ENCODE measurements at regions of chr1 and their contacts with region 1.

Region 1: DNA sequence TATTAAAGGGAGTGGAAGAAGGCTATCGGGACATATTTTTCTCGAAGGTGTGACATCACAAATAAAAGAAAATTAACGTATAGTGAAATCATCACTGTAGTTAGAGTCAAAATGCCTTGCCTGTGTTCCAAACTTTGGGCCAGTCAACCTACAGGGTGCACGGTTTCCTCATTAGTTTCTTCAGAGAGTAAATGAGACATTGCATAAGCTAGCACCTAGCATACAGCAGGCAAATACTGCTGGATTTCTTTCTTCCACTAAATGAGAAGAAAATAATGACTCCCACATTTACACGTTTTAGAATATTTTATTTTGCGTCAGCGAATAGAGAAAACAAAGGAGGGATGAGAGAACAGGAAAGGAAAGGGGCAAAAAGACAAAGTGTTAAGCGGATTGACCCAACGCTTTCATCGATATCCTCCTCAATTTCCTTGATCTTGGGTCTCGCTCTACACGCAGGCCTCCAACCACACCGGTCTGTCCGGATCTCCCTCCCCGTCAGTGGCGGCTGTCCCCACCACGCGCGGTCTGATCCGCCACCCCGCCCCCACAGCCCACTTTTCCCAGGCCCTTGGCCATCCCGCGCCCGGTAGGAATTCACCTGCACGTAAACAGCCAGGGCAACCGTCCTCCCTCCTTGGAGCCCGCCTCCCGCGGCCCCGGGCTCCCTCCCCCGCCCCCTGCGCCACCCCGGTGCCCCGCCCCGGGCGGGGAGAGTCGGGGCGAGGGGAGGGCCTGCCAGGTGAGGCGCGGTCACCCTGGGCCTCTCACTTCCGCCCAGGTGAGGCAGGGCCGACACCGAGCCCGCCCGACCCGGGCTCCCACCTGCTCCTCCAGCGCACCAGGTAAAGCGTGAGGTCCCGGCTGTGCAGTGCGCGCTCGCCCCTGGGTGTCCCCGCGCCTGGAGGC is at the start of gene PATJ:
- DNase-seq: peak; percentile 71 to 84 (median 81)
- H3K4me3 ChIP-seq: peak within 1 kb of the TSS; percentile 83
- H3K27ac ChIP-seq: peak within 1 kb of the TSS; percentile 96 to 99
- H3K4me1 ChIP-seq: no peaks in the 10 kb centered on the region
- H3K27me3 ChIP-seq: no peaks in the 10 kb centered on the region
- CTCF ChIP-seq: no peak
- EP300 ChIP-seq: no peak
- POLR2A ChIP-seq: no peak
- total RNA-seq, gene PATJ: 18.2 to 60.1 (median 26.8) TPM

Region 2: DNA sequence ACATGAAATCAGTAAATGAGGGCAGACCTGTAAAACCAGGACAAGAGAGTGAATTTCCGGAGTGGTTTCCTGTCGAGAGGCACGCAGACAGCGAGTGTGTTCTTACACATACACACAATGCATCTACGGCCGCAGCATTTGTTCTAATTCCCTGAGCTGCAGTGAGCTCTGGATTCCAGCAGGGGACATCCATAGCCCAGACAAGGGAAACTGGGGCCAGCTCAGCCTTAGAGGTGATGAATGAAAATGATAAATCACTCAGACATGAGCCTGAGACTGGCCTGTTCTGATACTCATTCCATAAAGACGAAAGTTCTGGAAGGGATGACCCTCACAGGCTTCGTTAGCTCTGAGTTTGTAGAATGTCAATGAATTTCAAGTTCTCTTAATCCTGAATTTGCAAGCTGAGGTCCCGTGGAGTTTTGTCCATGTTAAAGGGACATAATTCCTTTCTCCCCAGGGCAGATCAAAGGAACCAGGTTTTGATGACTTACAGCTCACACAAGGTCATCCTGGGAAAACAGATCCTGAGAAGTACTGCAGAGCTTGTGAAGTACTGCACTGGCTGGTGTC is 1460.5 kb before region 1 on chr1:
- intact Hi-C with region 1: no loop called
- DNase-seq: peak in 4 of 5 donors; percentile 13 to 35 (median 28)
- H3K4me3 ChIP-seq: no peak overlapping the region
- H3K27ac ChIP-seq: no peak overlapping the region
- H3K4me1 ChIP-seq: no peaks in the 10 kb centered on the region
- H3K27me3 ChIP-seq: no peaks in the 10 kb centered on the region
- CTCF ChIP-seq: peak in 1 of 3 donors; percentile 18
- EP300 ChIP-seq: no peak
- POLR2A ChIP-seq: no peak

Region 3: DNA sequence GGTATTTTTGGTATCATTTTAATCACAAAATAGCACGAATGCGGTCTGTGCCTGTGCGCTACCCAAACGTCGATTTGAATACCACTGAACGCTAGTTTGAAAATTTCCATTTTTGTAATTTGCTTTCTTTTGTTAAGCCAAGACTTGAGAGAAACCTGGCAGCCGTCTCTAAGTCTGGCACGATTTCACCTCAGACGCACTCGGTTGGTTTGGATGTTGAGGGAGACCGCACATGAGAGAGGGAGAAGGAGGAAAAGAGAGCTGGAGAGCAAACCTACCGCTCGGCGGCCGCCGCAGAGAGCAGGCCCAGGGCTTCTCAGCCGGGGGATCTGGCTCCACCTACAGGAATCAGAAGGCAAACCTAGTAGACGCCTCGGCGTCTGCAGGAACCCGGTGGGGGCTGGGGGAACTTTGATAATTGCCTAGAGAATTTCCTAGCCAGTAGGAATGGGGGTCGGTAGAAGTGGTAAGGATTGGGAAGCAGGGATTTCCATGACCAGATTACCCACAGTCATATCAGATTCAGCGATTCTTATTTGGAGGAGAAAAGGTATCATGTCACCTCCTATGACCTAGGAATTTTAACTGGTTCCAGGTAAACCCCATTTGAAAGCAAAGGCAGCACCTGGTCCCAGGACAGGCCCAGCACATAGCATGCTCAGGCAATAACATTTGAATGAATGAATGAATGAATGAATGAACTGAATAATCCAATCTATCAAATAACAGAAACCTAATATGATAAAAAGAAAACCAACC is 100.2 kb before region 1 on chr1:
- intact Hi-C with region 1: loop called in 1 of 4 experiments (anchors 5 kb)
- DNase-seq: peak; percentile 79 to 87 (median 81)
- H3K4me3 ChIP-seq: peak overlapping the region; percentile 21
- H3K27ac ChIP-seq: peak overlapping the region in 1 of 2 donors; percentile 64
- H3K4me1 ChIP-seq: peaks cover 18% of the 10 kb centered on the region
- H3K27me3 ChIP-seq: no peaks in the 10 kb centered on the region
- CTCF ChIP-seq: peak; percentile 46 to 71 (median 63)
- EP300 ChIP-seq: no peak
- POLR2A ChIP-seq: no peak

Region 4: DNA sequence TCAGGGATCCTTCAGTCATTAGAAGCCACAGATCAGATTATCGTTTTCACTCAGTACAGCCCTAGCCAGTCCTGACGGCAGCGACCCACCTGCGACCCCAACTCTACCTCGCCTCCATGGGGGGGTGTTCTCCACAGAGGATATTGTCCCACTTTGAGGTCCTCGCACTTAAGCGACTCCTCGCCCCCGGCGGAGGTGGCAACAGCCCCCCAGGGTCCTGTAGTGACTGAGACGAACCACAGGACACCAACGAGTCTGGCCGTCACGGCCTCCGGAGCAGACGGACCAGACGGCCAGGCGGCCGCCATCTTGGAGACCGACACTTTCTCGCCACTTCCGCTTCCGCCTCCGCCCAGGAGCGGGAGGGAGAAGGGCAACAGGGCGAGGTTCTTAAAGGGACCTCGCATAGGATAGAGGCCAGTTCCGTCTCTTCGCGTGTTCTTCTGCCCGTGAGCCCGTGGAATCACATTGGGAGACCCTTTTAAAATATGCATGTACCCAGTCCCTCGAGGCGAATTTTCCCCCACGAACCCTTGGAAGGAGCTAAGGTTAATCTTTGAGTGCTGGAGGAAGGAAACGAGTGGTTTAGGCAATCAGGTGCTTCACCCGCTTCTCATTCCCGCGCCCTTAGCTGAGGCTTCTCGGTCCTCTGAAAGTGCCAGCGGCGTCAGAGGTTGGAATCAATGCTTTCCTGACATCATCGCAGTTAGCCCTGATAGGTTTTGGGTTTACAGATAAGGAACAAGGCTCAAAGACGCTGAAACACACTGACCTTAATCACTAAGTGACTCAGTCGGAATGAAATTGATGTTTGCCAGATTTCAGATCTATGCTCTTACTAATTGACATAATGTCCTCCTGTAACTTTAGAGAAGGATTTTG is 16.9 kb before region 1 on chr1 and contains the start of gene TM2D1:
- intact Hi-C with region 1: loop called in 1 of 4 experiments (anchors 1 kb)
- DNase-seq: peak; percentile 84 to 90 (median 86)
- H3K4me3 ChIP-seq: peak within 1 kb of the TSS; percentile 78
- H3K27ac ChIP-seq: peak within 1 kb of the TSS; percentile 74 to 90
- H3K4me1 ChIP-seq: no peaks in the 10 kb centered on the region
- H3K27me3 ChIP-seq: no peaks in the 10 kb centered on the region
- CTCF ChIP-seq: peak in 1 of 3 donors; percentile 13
- EP300 ChIP-seq: no peak
- POLR2A ChIP-seq: peak; percentile 84
- total RNA-seq, gene TM2D1: 34.6 to 62.4 (median 42.4) TPM

Measured in ovary (tissue), 10 donors.